Esophagus muscularis mucosa (tissue), 4 donors: ENCODE measurements at regions of chr6 and their contacts with region 1.

Region 1: GRCh38 chr6:122730775-122731386 is 48.6 kb upstream of the FABP7 start:
- DNase-seq: no peak
- H3K4me3 ChIP-seq: no peak overlapping the region
- H3K27ac ChIP-seq: no peak overlapping the region
- H3K4me1 ChIP-seq: no peaks in the 10 kb centered on the region
- H3K27me3 ChIP-seq: peaks cover 0 to 5% (median 0%) of the 10 kb centered on the region in 4 donors
- CTCF ChIP-seq: peak; percentile 60 to 76 (median 69)
- EP300 ChIP-seq: no peak
- POLR2A ChIP-seq: no peak

Region 2: GRCh38 chr6:122568797-122569661 is 161.9 kb before region 1 on chr6:
- intact Hi-C with region 1: no loop called
- DNase-seq: no peak
- H3K4me3 ChIP-seq: no peak overlapping the region
- H3K27ac ChIP-seq: no peak overlapping the region
- H3K4me1 ChIP-seq: no peaks in the 10 kb centered on the region
- H3K27me3 ChIP-seq: no peaks in the 10 kb centered on the region
- CTCF ChIP-seq: no peak
- EP300 ChIP-seq: no peak
- POLR2A ChIP-seq: no peak

Region 3: DNA sequence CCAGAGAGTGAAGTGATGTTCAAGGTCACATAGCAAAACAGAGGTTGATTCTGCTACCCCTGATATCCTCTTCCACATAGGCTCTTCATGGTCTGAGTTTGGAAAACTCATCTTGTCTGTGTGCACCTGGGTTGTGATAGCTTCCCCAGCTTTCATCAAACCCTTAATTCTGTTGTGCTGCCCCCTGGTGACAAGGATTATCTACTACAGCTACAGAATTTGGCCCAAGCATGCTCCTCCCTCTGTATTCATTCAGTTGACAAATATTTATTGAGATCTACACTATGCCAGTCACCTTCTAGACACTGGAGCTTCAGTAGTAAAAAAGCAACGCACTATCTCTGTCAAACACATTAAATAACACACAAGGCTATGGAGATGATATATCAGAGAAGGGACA is 108.6 kb after region 1 on chr6:
- intact Hi-C with region 1: loop called (anchors 2 kb)
- DNase-seq: no peak
- H3K4me3 ChIP-seq: no peak overlapping the region
- H3K27ac ChIP-seq: no peak overlapping the region
- H3K4me1 ChIP-seq: no peaks in the 10 kb centered on the region
- H3K27me3 ChIP-seq: peaks cover 0 to 4% (median 0%) of the 10 kb centered on the region in 4 donors
- CTCF ChIP-seq: peak; percentile 68 to 74 (median 71)
- EP300 ChIP-seq: no peak
- POLR2A ChIP-seq: no peak

Region 4: DNA sequence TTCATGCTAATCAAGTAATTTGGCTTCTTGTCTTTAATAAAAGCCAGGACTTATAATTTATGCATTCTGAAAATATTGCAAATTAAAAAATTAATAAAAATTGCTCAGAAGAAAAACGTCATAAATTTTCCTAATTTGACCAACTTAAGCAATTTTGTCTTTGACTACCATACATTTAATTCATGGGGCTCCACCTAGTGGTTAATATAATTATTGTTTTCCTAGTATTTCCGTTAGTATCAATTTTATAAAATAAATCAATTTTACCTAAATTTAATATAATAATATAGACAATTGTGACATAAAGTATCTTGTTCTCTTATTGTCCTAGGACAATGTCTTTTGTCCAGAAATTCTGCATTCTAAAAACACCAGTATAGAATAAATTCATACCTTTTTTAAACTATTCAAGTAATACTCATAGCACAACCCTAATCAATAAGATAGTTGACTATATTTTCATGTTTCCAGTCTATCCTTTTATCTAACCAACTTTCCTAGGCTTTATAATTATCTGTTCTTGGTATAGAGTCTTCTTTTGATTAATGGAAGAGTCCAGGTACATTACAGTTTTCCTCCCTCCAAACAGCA is 585.9 kb after region 1 on chr6:
- intact Hi-C with region 1: loop called (anchors 5 kb)
- DNase-seq: no peak
- H3K4me3 ChIP-seq: no peak overlapping the region
- H3K27ac ChIP-seq: no peak overlapping the region
- H3K4me1 ChIP-seq: no peaks in the 10 kb centered on the region
- H3K27me3 ChIP-seq: no peaks in the 10 kb centered on the region
- CTCF ChIP-seq: peak in 2 of 3 experiments; percentile 49 to 57
- EP300 ChIP-seq: no peak
- POLR2A ChIP-seq: no peak